ENCODE measurements at regions of chr11 and their contacts with region 1.

Region 1: DNA sequence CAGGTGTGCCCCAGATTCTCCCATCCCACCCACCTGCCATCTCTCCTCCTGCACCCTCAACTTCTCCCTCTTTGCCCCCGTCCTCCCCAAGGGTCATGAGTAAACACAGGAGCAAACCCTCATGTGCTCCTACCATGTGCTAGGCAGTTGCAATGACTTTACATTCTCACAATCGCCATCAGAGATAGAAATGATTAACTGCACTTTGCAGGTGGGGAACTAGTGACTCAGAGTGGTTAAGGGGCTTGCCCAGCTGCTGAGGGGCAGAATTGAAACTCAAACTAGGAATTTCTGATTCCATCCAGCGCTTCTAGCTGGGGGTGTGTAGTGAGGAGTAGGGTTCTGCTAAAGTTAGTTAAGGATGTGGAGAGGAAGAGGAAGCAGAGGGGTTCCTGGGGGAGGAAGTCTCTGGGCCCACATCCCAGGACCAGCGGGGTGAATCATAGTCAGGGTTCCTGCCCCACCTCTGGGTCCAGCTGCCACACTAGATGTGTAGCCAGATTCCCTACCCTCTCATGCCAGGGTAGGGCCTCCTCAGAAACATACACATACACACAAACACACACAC is 16.0 kb upstream of the PRG2 start:
- DNase-seq: peak; percentile 25 to 49
- ATAC-seq: peak; percentile 74 to 89 (median 79)
- H3K4me3 ChIP-seq: no peak overlapping the region
- H3K27ac ChIP-seq: peak overlapping the region in 9 of 10 donors; percentile 49 to 82 (median 73)
- H3K4me1 ChIP-seq: peaks cover 6 to 38% (median 30%) of the 10 kb centered on the region in 9 donors
- H3K27me3 ChIP-seq: no peaks in the 10 kb centered on the region
- CTCF ChIP-seq: no peak

Region 2: DNA sequence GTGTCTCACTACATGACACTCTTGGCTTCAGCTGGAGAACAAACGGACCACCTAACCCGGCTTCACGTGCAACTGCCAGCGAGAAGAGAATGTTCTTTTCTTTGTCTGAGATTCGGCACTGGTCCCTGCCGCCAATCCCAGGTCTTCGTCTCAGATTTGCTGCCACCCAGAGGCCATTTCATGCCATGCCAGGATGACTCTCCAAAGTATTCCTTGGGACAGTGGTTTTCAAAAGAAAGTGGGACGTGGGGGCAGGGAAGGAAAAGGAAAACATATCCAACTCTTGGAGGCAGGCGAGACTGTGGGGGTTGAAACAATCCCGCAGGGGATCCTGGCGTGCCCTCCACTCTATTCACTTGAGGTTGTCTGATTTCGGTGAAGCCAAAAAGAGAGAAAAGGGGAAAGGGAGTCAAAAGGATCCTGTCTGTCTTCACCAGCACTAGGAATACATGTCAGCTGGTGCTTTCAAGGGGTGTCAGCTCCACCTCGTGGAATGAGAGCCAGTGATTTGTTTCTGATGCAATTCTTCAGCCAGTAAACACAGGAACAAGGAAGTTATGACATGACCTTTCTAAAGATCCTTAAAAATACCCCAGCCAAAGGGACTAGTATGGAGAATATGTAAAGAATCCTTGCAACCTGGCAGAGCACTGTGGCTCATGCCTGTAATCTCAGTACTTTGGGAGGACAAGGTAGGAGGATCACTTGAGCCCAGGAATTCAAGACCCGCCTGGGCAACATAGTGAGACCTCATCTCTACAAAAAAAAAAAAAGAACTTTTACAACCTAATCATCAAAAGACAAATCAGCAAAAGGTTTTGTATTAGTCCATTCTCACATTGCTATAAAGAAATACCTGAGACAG is 128.3 kb before region 1 on chr11:
- intact Hi-C with region 1: no loop called
- DNase-seq: peak; percentile 68 to 81
- ATAC-seq: peak; percentile 57 to 80 (median 73)
- H3K4me3 ChIP-seq: peak overlapping the region in 3 of 10 donors; percentile 5 to 24 (median 8)
- H3K27ac ChIP-seq: peak overlapping the region in 9 of 10 donors; percentile 59 to 92 (median 82)
- H3K4me1 ChIP-seq: peaks cover 0 to 40% (median 26%) of the 10 kb centered on the region in 9 donors
- H3K27me3 ChIP-seq: no peaks in the 10 kb centered on the region
- CTCF ChIP-seq: peak; percentile 70 to 87 (median 84)

Region 3: GRCh38 chr11:57358543-57358961 is 47.9 kb before region 1 on chr11:
- intact Hi-C with region 1: loop called in 2 of 10 experiments (anchors 5 kb)
- DNase-seq: peak in 1 of 2 donors; percentile 20
- ATAC-seq: peak in 7 of 8 donors; percentile 47 to 88 (median 79)
- H3K4me3 ChIP-seq: no peak overlapping the region
- H3K27ac ChIP-seq: peak overlapping the region in 5 of 10 donors; percentile 22 to 76 (median 50)
- H3K4me1 ChIP-seq: peaks cover 0 to 35% (median 12%) of the 10 kb centered on the region in 9 donors
- H3K27me3 ChIP-seq: no peaks in the 10 kb centered on the region
- CTCF ChIP-seq: no peak